A673 (cell line): ENCODE measurements at regions of chr3 and their contacts with region 1.

Region 1: DNA sequence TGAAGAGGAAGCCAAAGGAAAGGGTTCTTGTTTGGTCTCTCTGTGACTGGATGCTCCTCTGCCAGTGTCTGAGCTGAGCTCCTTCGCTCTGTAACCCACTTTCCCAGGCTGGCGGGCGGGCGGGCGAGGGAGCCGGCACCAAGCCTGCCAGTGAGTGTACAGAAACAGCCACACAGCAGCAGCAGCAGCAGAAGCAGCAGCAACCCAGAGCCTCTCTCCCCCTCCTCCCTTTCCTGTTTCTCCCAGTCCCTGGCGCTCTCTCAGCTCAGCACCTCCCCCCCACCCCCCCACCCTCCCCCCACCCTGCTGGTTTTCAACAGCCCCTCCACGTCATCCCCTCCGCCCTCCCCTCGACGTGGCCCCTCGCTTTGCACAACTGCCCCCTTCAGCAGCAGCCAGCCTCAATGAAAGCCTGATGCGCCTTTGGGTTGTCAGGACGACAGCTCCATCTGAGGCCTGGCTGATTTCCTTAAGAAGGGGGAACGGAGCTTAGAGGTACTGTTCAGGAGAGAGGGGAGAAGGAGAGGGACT is at the start of gene LSAMP:
- DNase-seq: peak; percentile 71
- H3K4me3 ChIP-seq: peak within 1 kb of the TSS; percentile 56
- H3K27ac ChIP-seq: peak within 1 kb of the TSS; percentile 26
- H3K4me1 ChIP-seq: peaks cover 9% of the 10 kb centered on the region
- H3K27me3 ChIP-seq: no peaks in the 10 kb centered on the region
- CTCF ChIP-seq: no peak
- total RNA-seq, gene LSAMP: 10.1 and 12.5 TPM in 2 replicates

Region 2: DNA sequence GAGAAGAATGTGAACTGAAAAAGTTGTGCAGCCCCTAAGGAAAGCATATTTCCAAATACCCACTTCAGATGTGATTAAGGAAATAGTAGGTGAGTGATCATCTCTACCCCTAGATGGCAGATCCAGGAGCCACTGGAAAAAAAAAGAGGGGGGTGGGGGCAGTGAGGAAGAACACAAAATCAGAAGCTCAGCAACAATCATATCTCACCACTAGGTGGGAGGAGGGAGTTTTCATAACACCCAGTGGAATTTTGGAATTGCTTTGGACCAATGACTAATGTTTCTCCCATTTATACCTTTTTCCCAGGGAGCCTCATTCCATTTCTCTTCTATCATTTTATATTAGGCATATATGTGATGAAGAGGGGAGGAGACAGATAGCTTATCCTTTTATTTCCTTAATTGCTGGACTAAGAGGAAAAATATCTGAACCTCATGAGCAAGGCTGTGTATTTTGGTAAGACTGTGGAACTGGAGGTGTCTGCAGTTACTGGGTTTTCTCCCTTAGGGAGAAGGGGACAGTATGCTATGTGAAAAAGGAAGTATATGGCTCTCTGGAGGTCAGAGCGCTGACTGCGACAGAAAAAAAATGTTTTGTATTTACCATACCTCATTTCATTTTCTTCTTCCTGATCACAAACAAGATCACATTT is 458.7 kb before region 1 on chr3:
- CTCF ChIA-PET with region 1: no interaction called
- POLR2A ChIA-PET with region 1: no interaction called
- intact Hi-C with region 1: loop called (anchors 10 kb)
- DNase-seq: peak; percentile 65
- H3K4me3 ChIP-seq: no peak overlapping the region
- H3K27ac ChIP-seq: no peak overlapping the region
- H3K4me1 ChIP-seq: peaks cover 26% of the 10 kb centered on the region
- H3K27me3 ChIP-seq: no peaks in the 10 kb centered on the region
- CTCF ChIP-seq: peak; percentile 52

Region 3: GRCh38 chr3:116399701-116400226 is 45.6 kb before region 1 on chr3:
- CTCF ChIA-PET with region 1: no interaction called
- POLR2A ChIA-PET with region 1: interaction called, 14 read pairs
- intact Hi-C with region 1: no loop called
- DNase-seq: no peak
- H3K4me3 ChIP-seq: no peak overlapping the region
- H3K27ac ChIP-seq: no peak overlapping the region
- H3K4me1 ChIP-seq: no peaks in the 10 kb centered on the region
- H3K27me3 ChIP-seq: no peaks in the 10 kb centered on the region
- CTCF ChIP-seq: no peak

Region 4: GRCh38 chr3:116413319-116413718 is 32.1 kb before region 1 on chr3:
- CTCF ChIA-PET with region 1: no interaction called
- POLR2A ChIA-PET with region 1: no interaction called
- intact Hi-C with region 1: no loop called
- DNase-seq: peak; percentile 7
- H3K4me3 ChIP-seq: no peak overlapping the region
- H3K27ac ChIP-seq: no peak overlapping the region
- H3K4me1 ChIP-seq: peaks cover 4% of the 10 kb centered on the region
- H3K27me3 ChIP-seq: no peaks in the 10 kb centered on the region
- CTCF ChIP-seq: 0 out of 2 replicates have a peak, but pooled peaks have one; percentile 24

Region 5: GRCh38 chr3:116618138-116618537 is 172.8 kb after region 1 on chr3:
- CTCF ChIA-PET with region 1: no interaction called
- POLR2A ChIA-PET with region 1: no interaction called
- intact Hi-C with region 1: no loop called
- DNase-seq: no peak
- H3K4me3 ChIP-seq: no peak overlapping the region
- H3K27ac ChIP-seq: no peak overlapping the region
- H3K4me1 ChIP-seq: no peaks in the 10 kb centered on the region
- H3K27me3 ChIP-seq: no peaks in the 10 kb centered on the region
- CTCF ChIP-seq: no peak

Region 6: GRCh38 chr3:116669576-116669975 is 224.2 kb after region 1 on chr3:
- CTCF ChIA-PET with region 1: no interaction called
- POLR2A ChIA-PET with region 1: interaction called, 14 read pairs
- intact Hi-C with region 1: no loop called
- DNase-seq: no peak
- H3K4me3 ChIP-seq: no peak overlapping the region
- H3K27ac ChIP-seq: no peak overlapping the region
- H3K4me1 ChIP-seq: no peaks in the 10 kb centered on the region
- H3K27me3 ChIP-seq: no peaks in the 10 kb centered on the region
- CTCF ChIP-seq: no peak